Aorta (tissue), 5 donors: ENCODE measurements at regions of chr16 and their contacts with region 1.

Region 1: DNA sequence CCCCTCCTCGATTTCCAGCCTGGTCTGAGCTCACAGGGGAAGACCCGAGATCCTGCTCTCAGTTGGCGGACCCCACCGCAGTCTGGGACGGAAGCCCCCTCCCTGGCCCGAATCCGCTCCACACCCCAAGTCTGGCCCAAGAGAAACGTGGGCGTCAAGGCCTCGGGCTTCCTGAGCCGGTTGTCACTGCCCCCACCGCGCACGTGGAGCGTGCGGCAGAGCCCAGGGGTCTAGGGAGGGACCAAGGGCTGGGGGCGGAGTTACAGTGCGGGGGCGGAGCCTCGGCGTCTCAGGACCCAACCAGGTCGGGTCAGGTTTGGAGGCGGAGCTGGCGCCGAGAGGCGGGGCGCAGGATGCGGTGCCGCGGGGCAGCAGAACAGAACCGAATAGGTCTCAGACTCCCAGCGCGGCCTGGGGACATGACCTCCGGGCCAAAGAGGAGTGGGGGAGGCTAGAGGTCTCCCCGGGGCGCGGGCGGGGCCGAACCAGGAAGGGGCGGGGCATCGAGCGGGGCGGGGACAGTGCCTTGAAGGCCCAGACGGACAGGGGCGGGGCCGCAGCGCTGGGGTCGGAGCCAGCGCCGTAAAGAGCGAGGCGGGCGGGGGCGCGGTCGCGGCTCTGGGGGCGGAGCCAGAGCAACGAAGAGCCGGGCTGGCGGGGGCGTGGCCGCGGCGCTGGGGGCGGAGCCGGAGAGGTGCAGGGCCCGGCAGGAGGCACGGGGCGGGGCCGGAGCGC is 431 bp upstream of the ZFPM1 start:
- DNase-seq: peak; percentile 98 to 100
- ATAC-seq: peak; percentile 95
- H3K4me3 ChIP-seq: peak overlapping the region in 1 of 2 donors; percentile 55
- H3K27ac ChIP-seq: no peak overlapping the region
- H3K4me1 ChIP-seq: no peaks in the 10 kb centered on the region
- H3K27me3 ChIP-seq: no peaks in the 10 kb centered on the region

Region 2: DNA sequence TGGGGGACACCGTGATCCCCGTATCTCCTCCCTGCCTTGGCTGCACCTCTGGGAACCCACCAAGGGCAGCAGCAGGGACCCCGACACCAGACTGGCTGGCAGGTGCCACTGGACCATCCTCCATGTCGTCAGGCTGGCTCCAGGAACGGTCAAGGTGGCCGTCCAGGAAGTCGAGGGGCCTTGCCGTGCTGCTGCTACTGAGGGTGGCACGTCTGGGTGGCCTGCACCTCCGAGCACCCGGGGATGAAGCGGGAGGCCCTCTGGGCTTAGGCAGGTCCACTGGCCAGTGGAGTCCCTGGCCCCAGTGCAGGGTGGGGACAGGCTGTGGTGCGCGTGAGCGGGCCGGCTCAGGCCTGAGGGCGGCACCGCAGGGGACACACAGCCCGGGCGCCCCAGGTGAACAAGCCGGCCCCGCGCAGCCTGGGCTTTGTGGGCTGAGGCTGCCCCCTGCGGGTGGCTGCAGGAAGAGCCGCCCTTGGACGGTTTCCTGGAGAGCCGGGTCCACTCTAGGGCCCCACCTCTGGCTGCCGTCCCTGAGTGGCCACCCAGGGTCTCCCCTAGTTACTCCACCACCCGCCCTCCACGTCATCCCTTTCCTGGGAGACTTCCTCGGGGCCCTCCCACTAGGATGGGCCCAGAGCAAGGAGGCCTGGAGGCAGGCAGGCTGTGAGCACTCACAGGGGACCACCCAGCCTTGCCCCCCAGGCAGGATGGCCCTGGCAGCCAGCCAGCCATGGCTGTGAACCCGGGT is 74.7 kb after region 1 on chr16:
- intact Hi-C with region 1: loop called in 1 of 2 experiments (anchors 2 kb)
- DNase-seq: peak in 1 of 2 donors; percentile 87
- ATAC-seq: peak; percentile 62
- H3K4me3 ChIP-seq: no peak overlapping the region
- H3K27ac ChIP-seq: no peak overlapping the region
- H3K4me1 ChIP-seq: no peaks in the 10 kb centered on the region
- H3K27me3 ChIP-seq: no peaks in the 10 kb centered on the region

Region 3: GRCh38 chr16:88785106-88785924 is 332.7 kb after region 1 on chr16 and contains the start of gene PIEZO1:
- intact Hi-C with region 1: loop called in 1 of 2 experiments (anchors 10 kb)
- DNase-seq: peak; percentile 81 to 93
- ATAC-seq: peak; percentile 77
- H3K4me3 ChIP-seq: peak within 1 kb of the TSS; percentile 79 to 92
- H3K27ac ChIP-seq: peak within 1 kb of the TSS in 1 of 2 donors; percentile 80
- H3K4me1 ChIP-seq: no peaks in the 10 kb centered on the region
- H3K27me3 ChIP-seq: no peaks in the 10 kb centered on the region
- total RNA-seq, gene PIEZO1: 101 to 120 TPM